Activated T-helper 2 cell treated with anti-CD3 and anti-CD28 coated beads, Interferon-gamma antibody, Interleukin-2, Interleukin-4, amounts not matched to agents 10 μg/mL and 5 μg/mL and 100 μg/mL, durations not matched to agents 14 hours and 24 hours and 36 hours (primary cell): ENCODE measurements at regions of chr4 and their contacts with region 1.

Region 1: GRCh38 chr4:56655209-56655626 is 25.9 kb downstream of the HOPX start:
- DNase-seq: no peak
- H3K4me3 Mint-ChIP-seq: peak overlapping the region; percentile 87
- H3K27ac Mint-ChIP-seq: peak overlapping the region; percentile 65
- H3K4me1 Mint-ChIP-seq: peaks cover 61% of the 10 kb centered on the region
- H3K27me3 Mint-ChIP-seq: peaks cover 31% of the 10 kb centered on the region

Region 2: DNA sequence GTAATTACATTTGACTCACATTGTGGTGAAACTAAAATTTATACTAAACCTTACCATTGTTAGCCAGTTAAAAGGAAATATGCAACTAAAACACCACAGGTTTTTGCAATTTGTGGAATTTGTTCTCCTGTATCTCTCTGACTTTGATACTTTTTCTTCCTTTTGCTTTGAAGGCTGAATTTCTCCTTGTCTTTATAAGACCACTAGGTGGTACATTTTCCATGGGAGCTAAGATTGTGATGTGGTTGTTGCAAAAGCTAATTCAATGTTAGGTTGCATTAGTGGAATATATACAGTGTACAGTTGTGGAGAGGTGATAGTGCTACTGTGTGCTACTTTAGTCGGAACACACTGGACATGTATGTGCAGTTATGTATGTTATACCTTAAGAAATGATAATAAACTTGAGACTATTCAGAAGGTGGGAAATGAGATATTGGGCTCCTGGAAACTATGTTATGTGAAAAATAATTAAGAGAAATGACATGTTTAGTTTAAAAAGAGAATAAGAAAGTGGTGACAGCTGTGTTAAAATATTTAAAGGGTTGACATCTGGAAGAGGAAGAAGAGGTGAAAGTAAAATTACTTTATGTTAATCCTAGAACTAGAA is 79.3 kb before region 1 on chr4:
- intact Hi-C with region 1: loop called (anchors 5 kb)
- DNase-seq: no peak
- H3K4me3 Mint-ChIP-seq: no peak overlapping the region
- H3K27ac Mint-ChIP-seq: no peak overlapping the region
- H3K4me1 Mint-ChIP-seq: no peaks in the 10 kb centered on the region
- H3K27me3 Mint-ChIP-seq: peaks cover 11% of the 10 kb centered on the region

Region 3: DNA sequence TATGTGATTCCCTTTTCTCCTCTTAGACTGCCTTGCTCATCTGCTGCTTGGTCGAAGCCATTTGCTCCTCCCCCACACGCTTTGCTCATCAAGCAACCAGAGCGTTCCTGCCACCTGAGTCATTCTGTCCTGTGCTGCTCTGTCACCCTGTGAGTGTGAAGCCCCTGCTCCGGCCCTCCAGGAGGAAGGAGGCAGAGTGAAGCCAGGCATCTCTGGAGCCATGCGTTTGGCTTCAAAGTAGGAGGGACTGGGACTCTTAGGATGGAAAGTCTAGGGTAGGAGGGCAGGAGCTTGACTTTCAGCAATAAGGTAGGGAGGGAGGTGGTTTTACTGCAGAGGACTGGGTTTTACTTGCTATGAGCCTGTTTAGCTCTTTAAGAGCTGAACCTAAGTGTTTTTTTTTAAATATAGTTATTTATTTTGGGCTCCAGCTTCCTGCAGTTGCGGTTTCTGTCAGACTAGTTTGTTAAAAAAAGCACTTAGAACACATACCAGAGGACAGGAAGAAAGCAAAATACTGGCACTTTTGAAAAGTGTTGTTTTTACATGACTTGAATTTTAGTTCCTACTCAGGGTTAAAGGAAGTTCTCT is 102.7 kb after region 1 on chr4:
- intact Hi-C with region 1: loop called (anchors 5 kb)
- DNase-seq: peak; percentile 70
- H3K4me3 Mint-ChIP-seq: peak overlapping the region; percentile 61
- H3K27ac Mint-ChIP-seq: peak overlapping the region; percentile 95
- H3K4me1 Mint-ChIP-seq: peaks cover 47% of the 10 kb centered on the region
- H3K27me3 Mint-ChIP-seq: peaks cover 11% of the 10 kb centered on the region

Region 4: DNA sequence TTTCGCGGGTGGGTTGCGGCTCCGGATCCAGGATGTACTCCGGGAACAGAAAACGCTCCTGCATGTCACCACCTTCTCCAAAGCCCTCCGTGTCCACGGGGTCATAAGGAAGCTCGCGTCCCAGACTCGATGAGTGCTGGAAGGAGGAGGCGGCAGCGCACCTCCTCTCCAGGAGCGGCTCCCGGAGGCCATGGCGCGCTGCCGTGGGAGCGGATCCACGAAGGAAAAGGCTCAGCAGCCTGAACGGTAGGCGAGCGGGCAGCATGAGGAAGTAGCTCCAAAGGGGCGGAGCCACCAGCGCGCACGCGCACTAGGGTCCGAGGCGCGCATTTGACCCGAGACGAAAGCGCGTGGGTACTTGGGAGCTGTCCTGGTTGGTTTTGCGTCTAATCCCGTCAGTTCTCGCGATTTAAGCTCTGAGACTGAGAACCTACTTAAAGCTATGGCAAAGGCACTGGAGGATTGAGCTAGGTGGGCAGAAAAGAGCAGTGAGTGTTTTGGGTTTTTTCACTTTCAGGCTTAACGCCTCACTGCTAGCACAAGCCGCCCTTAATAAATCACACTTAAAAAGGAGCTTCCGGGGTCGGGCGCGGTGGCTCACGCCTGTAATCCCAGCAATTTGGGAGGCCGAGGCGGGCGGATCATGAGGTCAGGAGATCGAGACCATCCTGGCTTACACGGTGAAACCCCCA is 322.2 kb after region 1 on chr4 and contains the start of gene NOA1:
- intact Hi-C with region 1: loop called (anchors 10 kb)
- DNase-seq: peak; percentile 98
- H3K4me3 Mint-ChIP-seq: peak within 1 kb of the TSS; percentile 100
- H3K27ac Mint-ChIP-seq: peak within 1 kb of the TSS; percentile 100
- H3K4me1 Mint-ChIP-seq: peaks cover 41% of the 10 kb centered on the region
- H3K27me3 Mint-ChIP-seq: no peaks in the 10 kb centered on the region
- total RNA-seq, gene NOA1: 16.5 and 18.1 TPM in 2 replicates